Psoas muscle (tissue), 8 donors: ENCODE measurements at regions of chr6 and their contacts with region 1.

Region 1: GRCh38 chr6:126180585-126180984 is 159.3 kb upstream of the CENPW start:
- DNase-seq: no peak
- ATAC-seq: peak; percentile 91 to 97 (median 96)
- H3K4me3 ChIP-seq: no peak overlapping the region
- H3K27ac ChIP-seq: peak overlapping the region; percentile 56
- H3K4me1 ChIP-seq: peaks cover 3% of the 10 kb centered on the region
- H3K27me3 ChIP-seq: no peaks in the 10 kb centered on the region
- CTCF ChIP-seq: no peak

Region 2: DNA sequence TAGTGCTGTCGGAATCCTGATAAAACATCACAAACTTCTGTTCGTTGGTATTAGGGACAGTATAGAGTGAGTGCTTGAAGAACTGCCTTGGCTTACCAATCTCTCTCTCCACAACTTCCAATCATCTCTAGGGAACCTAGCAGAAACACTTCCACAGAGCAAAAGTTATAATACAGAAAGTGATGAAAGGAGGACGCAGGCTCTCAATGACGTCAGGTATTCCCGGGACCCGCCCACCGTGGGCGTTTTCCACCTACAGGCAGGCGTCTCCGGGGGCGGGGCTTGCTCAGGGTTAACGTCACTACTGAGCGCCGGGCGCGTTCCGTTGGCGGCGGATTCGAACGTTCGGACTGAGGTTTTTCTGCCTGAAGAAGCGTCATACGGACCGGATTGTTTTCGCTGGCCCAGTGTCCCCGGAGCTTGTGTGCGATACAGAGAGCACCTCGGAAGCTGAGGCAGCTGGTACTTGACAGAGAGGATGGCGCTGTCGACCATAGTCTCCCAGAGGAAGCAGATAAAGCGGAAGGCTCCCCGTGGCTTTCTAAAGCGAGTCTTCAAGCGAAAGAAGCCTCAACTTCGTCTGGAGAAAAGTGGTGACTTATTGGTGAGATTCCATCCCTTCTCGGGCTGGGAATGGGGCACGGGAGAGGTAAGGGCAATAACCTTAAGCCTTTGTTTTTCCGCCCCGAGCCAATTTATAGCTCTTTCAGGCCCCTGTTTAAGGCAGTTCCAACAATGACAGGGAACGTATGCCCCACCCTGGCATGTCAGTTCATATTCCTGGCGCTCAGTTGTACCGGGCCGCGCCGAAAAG is 159.4 kb after region 1 on chr6 and contains the start of gene CENPW:
- intact Hi-C with region 1: loop called in 1 of 2 experiments (anchors 10 kb)
- DNase-seq: peak; percentile 83 to 94
- ATAC-seq: peak; percentile 76 to 93 (median 86)
- H3K4me3 ChIP-seq: peak within 1 kb of the TSS; percentile 76
- H3K27ac ChIP-seq: no peak within 1 kb of the TSS
- H3K4me1 ChIP-seq: peaks cover 12% of the 10 kb centered on the region
- H3K27me3 ChIP-seq: no peaks in the 10 kb centered on the region
- CTCF ChIP-seq: no peak
- total RNA-seq, gene CENPW: 1.3 to 7.4 (median 2.0) TPM

Region 3: GRCh38 chr6:126461055-126461454 is 280.5 kb after region 1 on chr6:
- intact Hi-C with region 1: no loop called
- DNase-seq: no peak
- ATAC-seq: no peak
- H3K4me3 ChIP-seq: no peak overlapping the region
- H3K27ac ChIP-seq: no peak overlapping the region
- H3K4me1 ChIP-seq: no peaks in the 10 kb centered on the region
- H3K27me3 ChIP-seq: no peaks in the 10 kb centered on the region
- CTCF ChIP-seq: no peak